Caco-2 (cell line): ENCODE measurements at regions of chr14 and their contacts with region 1.

Region 1: GRCh38 chr14:70045844-70046535 is 142.8 kb downstream of the SLC8A3 start:
- DNase-seq: peak; percentile 54 to 64
- H3K4me3 ChIP-seq: no peak overlapping the region
- H3K4me3 Mint-ChIP-seq: no peak overlapping the region
- H3K27ac Mint-ChIP-seq: peak overlapping the region; percentile 65
- H3K4me1 ChIP-seq: peaks cover 33% of the 10 kb centered on the region
- H3K4me1 Mint-ChIP-seq: peaks cover 44% of the 10 kb centered on the region
- H3K27me3 ChIP-seq: no peaks in the 10 kb centered on the region
- H3K27me3 Mint-ChIP-seq: no peaks in the 10 kb centered on the region
- CTCF ChIP-seq: peak; percentile 43 to 52

Region 2: GRCh38 chr14:70061108-70061507 is 15.1 kb after region 1 on chr14:
- CTCF ChIA-PET with region 1: no interaction called
- POLR2A ChIA-PET with region 1: no interaction called
- intact Hi-C with region 1: no loop called
- DNase-seq: no peak
- H3K4me3 ChIP-seq: no peak overlapping the region
- H3K4me3 Mint-ChIP-seq: no peak overlapping the region
- H3K27ac Mint-ChIP-seq: no peak overlapping the region
- H3K4me1 ChIP-seq: 0 out of 2 replicates have a peak, but pooled peaks cover 4% of the 10 kb centered on the region
- H3K4me1 Mint-ChIP-seq: peaks cover 15% of the 10 kb centered on the region
- H3K27me3 ChIP-seq: no peaks in the 10 kb centered on the region
- H3K27me3 Mint-ChIP-seq: no peaks in the 10 kb centered on the region
- CTCF ChIP-seq: no peak

Region 3: DNA sequence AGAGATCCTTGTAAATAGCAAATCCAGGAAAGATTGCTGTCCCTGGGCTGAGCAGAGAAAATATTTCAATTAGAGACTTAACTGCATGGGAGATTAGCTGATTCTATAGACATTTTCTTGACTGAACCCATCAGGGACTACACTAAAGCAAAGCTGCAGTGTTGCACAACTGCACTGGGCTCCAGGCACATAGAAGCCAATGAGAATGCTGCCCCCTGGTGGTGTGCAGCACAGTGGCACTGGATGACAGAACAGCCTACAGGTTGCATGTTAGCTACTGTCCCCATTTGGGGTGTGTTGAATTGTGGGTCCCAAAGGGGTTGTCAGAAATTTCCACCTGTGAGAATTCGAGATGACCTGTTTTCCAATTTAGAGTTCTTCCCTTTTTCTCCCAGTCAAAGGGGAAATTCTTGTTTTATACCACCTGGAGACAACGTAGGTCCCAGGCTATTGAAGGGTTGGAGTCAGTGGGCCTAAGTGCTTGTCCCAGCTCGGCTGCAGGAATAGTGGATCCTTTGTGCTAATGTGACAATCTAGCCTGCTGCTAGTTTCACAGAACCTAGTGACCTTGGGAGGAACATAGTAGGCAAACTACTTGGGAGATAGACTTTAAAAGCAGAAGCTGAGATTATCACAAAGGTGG is 28.1 kb after region 1 on chr14:
- CTCF ChIA-PET with region 1: interaction called, 31 read pairs
- POLR2A ChIA-PET with region 1: interaction called, 5 read pairs
- intact Hi-C with region 1: loop called (anchors 1 kb)
- DNase-seq: peak; percentile 82 to 87
- H3K4me3 ChIP-seq: no peak overlapping the region
- H3K4me3 Mint-ChIP-seq: no peak overlapping the region
- H3K27ac Mint-ChIP-seq: no peak overlapping the region
- H3K4me1 ChIP-seq: peaks cover 13% of the 10 kb centered on the region
- H3K4me1 Mint-ChIP-seq: peaks cover 18% of the 10 kb centered on the region
- H3K27me3 ChIP-seq: no peaks in the 10 kb centered on the region
- H3K27me3 Mint-ChIP-seq: no peaks in the 10 kb centered on the region
- CTCF ChIP-seq: peak; percentile 88 to 96

Region 4: DNA sequence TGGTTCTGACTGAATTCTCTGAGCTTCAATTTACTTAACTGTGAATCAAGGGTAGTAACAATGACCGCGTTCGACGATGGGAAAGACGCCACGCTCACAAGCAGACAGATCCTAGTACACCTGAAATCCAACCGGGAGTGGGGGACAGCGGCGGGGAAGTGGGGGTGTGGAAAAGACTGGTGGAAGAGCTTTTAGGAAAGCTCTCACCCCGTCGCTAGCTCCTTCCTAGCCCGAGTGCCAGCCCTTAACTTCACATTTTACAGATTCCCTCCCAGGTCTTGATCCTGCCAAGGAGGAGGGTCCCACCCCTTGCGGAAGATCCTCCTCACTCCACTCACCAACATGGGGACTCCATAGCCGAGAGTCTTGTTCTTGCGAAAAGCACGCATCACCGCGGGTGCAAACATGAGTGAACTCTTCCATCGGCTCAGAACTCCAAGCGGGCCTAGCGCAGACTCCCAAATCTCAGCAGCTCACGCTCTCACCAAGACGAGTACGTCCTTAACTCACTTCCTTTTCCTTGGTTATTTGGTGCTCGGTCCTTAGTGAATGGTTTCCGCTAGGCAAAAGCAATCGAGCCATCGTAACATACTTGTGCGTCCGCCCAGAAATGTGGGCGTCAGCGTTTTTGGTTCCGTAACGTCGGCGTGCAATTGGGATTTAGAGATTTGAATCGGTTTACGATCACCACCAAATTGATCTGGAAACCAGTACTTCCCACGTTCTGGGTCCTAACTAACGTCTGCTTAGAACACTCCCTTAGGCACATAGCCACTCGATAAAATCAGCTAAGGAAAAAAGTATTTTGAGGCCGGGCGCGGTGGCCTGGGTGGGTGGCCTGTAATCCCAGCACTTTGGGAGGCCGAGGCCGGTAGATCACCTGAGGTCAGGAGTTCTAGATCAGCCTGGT is 313.4 kb after region 1 on chr14 and contains the start of gene COX16:
- CTCF ChIA-PET with region 1: no interaction called
- POLR2A ChIA-PET with region 1: no interaction called
- intact Hi-C with region 1: loop called (anchors 1 kb)
- DNase-seq: peak; percentile 86 to 92
- H3K4me3 ChIP-seq: peak within 1 kb of the TSS; percentile 72
- H3K4me3 Mint-ChIP-seq: peak within 1 kb of the TSS; percentile 79
- H3K27ac Mint-ChIP-seq: peak within 1 kb of the TSS; percentile 82
- H3K4me1 ChIP-seq: no peaks in the 10 kb centered on the region
- H3K4me1 Mint-ChIP-seq: no peaks in the 10 kb centered on the region
- H3K27me3 ChIP-seq: no peaks in the 10 kb centered on the region
- H3K27me3 Mint-ChIP-seq: no peaks in the 10 kb centered on the region
- CTCF ChIP-seq: no peak
- total RNA-seq, gene COX16: 62.4 and 68.1 TPM in 2 replicates